ENCODE measurements at regions of chr19 and their contacts with region 1.

Region 1: GRCh38 chr19:38315657-38316476 is at the start of gene YIF1B:
- DNase-seq: peak; percentile 98
- H3K4me3 Mint-ChIP-seq: peak within 1 kb of the TSS; percentile 89
- H3K27ac Mint-ChIP-seq: peak within 1 kb of the TSS; percentile 92
- H3K4me1 Mint-ChIP-seq: peaks cover 50% of the 10 kb centered on the region
- H3K27me3 Mint-ChIP-seq: no peaks in the 10 kb centered on the region
- total RNA-seq, gene YIF1B: 56.0 to 61.1 TPM

Region 2: DNA sequence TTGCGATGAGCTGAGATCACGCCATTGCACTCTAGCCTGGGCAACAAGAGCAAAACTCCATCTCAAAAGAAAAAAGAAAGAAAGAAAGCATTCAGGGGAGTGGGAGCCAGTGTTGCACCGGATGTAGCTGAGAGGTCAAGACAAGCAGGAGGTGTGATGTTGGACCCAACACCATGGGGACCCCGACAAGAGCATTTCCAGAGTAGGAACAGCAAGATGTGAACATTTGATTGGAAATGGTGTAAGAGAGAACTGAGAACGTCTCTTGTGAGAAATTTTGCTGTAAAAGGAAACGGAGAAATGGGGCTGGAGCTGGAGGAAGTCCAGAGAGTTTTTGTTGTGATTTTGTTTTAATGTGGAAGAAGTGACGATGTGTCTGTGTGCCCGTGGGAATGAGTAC is 76.1 kb before region 1 on chr19:
- CTCF ChIA-PET with region 1: interaction called, 10 read pairs
- intact Hi-C with region 1: loop called (anchors 5 kb)
- DNase-seq: no peak
- H3K4me3 Mint-ChIP-seq: no peak overlapping the region
- H3K27ac Mint-ChIP-seq: no peak overlapping the region
- H3K4me1 Mint-ChIP-seq: peaks cover 2% of the 10 kb centered on the region
- H3K27me3 Mint-ChIP-seq: no peaks in the 10 kb centered on the region

Region 3: GRCh38 chr19:38263689-38264485 is 52.0 kb before region 1 on chr19:
- CTCF ChIA-PET with region 1: no interaction called
- intact Hi-C with region 1: loop called (anchors 1 kb)
- DNase-seq: peak; percentile 86
- H3K4me3 Mint-ChIP-seq: peak overlapping the region; percentile 80
- H3K27ac Mint-ChIP-seq: peak overlapping the region; percentile 90
- H3K4me1 Mint-ChIP-seq: peaks cover 34% of the 10 kb centered on the region
- H3K27me3 Mint-ChIP-seq: peaks cover 3% of the 10 kb centered on the region

Region 4: DNA sequence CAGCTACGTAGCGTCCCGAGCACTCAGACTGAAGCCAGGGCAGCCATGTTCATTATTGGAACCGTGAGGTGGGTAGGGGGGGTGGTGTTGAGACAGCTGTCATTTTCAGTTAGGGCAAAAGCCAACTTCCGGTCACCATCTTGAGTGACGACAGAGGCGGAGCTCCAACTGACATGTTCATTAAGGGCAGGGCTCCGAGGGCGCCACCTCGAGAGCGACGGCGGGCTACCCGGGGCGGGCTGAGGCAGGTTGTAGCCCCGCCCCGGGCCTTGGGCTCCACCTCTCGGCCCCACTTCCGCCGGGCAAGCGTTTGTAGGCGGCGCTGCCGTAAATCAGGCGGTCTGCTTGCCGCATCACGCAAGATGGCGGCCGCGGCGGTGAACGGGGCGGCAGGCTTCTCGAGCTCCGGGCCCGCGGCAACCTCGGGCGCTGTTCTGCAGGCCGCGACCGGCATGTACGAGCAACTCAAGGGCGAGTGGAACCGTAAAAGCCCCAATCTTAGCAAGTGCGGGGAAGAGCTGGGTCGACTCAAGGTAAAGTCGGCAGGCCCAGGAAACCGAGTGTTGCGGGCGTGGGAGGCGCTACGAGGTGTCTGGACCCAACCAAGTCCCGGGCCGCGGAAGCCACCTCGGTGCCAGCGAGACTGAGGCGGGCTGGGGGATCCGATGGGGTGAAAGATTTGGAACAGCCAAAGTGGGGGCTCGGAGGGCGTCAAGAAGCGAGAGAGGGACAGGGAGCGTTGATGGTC is 58.7 kb after region 1 on chr19 and contains the start of gene PSMD8:
- CTCF ChIA-PET with region 1: no interaction called
- intact Hi-C with region 1: loop called (anchors 1 kb)
- DNase-seq: peak; percentile 100
- H3K4me3 Mint-ChIP-seq: peak within 1 kb of the TSS; percentile 98
- H3K27ac Mint-ChIP-seq: peak within 1 kb of the TSS; percentile 93
- H3K4me1 Mint-ChIP-seq: peaks cover 32% of the 10 kb centered on the region
- H3K27me3 Mint-ChIP-seq: no peaks in the 10 kb centered on the region
- total RNA-seq, gene PSMD8: 194 to 204 TPM

Region 5: DNA sequence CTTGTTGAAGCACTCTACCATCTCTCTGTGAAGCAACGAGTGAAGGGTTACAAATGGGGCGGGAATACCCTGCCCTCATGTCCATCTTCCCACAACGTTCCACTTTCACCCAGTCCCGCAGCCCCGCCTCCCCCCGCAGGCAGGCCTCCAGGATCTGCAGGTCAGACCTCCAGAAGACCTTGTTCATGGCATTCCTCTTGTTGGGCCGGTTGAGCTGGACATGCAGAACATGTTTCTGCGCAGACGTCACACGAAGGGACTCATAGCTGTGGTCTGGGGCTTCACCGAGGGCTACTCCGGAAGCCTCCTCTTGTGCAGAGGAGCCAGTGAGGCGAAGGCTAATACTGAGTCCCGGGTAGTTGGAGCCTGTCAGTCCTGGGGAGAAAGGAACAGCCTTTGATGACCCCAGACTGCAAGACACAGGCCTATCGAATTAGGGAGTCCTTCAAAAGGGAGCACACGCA is 515.3 kb after region 1 on chr19:
- CTCF ChIA-PET with region 1: no interaction called
- intact Hi-C with region 1: loop called (anchors 10 kb)
- DNase-seq: peak; percentile 64
- H3K4me3 Mint-ChIP-seq: peak overlapping the region; percentile 79
- H3K27ac Mint-ChIP-seq: peak overlapping the region; percentile 94
- H3K4me1 Mint-ChIP-seq: peaks cover 34% of the 10 kb centered on the region
- H3K27me3 Mint-ChIP-seq: no peaks in the 10 kb centered on the region